ENCODE measurements at regions of chr12 and their contacts with region 1.

Region 1: DNA sequence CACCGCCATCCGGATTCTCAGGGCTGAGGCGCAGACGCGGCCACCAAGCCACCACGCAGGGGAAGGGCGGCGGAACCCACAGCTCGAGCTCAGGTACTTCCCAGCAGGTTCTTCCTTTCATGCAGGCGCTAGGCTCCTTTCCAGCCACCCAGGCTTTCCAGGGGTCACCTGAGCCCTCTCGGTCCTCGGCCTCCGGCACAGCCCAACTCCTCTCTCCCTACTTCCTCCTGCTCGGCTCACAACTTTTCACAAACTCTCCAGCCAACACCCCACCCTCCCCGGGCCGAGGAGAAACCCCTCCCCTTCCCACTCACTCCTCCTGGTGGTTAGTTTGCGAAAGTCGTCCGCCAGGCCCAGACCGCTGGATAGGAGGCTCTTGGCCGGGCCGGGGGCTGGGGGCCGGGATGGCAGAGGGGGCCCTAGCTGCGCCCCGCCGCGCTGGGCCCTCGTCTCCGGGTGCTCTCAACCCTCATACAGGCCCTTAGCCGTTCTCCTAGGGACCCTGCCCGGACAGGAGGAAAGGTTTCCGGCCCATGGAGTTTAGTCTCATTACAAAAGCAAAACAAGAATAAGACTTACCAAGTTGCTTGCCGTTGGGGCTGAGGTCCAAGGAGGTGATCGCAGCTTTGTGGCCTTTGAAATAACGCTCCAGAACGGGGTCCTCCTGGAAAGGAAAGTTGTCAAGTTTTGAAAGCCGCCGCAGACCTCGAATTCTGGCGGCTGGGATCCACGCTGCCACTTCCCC is at the start of gene GALNT4:
- DNase-seq: peak; percentile 88
- CTCF ChIP-seq: peak; percentile 66

Region 2: DNA sequence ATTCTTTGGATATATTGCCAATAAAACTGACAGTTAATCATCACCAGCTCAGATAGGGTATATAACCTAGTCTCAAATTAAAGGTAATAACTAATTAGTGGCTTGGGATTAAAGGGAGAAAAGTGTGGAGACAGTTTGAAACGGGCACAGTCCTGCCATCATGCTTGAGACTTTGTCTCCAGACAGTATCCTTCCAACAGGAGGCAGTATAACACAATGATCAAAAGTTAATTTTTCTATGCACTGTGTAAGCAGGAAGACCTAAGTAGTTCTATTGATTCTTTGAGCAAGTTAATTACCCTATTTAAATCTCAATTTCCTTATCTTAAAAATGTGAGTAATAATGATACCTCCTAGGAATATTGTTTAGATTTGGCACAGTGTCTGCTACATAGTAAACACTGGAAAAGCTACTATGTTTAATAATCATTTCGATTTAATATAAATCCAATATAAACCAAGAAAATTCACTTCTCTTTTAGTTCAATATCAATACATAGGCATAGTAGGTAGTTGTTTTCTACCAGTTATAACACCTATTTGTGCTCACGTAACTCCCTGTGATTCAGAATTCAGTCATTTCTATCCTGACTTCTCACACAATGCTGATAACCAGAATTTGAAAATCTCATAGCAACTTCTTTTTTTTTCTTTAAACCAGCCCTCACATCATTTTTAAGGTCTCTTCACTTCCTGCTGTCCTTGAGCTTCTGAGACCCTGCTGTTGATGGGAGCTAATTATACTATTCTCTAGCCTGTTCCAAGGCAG is 53.8 kb before region 1 on chr12:
- CTCF ChIA-PET with region 1: interaction called, 132 read pairs
- POLR2A ChIA-PET with region 1: no interaction called
- DNase-seq: peak; percentile 39
- CTCF ChIP-seq: peak; percentile 53

Region 3: DNA sequence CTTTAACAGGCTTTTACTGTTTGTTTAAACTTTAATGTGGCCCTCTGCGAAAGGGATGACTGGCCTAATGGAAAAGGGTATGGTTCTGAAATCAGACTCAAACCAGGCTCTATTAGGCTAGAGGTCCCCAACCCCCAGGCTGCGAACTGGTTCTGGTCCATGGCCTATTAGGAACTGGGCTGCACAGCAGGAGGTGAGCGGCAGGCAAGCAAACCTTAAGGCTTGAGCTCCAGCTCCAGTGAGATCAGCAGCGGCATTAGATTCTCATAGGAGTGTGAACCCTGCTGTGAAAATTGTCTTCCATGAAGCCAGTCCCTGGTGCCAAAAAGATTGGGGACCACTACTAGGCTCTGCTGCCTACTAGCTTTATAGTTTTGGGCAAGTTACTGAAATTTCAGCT is 11.2 kb before region 1 on chr12:
- CTCF ChIA-PET with region 1: interaction called, 37 read pairs
- POLR2A ChIA-PET with region 1: no interaction called
- DNase-seq: no peak
- CTCF ChIP-seq: no peak

Region 4: GRCh38 chr12:89618107-89618862 is 93.6 kb after region 1 on chr12:
- CTCF ChIA-PET with region 1: no interaction called
- POLR2A ChIA-PET with region 1: no interaction called
- DNase-seq: no peak
- CTCF ChIP-seq: no peak

Region 5: DNA sequence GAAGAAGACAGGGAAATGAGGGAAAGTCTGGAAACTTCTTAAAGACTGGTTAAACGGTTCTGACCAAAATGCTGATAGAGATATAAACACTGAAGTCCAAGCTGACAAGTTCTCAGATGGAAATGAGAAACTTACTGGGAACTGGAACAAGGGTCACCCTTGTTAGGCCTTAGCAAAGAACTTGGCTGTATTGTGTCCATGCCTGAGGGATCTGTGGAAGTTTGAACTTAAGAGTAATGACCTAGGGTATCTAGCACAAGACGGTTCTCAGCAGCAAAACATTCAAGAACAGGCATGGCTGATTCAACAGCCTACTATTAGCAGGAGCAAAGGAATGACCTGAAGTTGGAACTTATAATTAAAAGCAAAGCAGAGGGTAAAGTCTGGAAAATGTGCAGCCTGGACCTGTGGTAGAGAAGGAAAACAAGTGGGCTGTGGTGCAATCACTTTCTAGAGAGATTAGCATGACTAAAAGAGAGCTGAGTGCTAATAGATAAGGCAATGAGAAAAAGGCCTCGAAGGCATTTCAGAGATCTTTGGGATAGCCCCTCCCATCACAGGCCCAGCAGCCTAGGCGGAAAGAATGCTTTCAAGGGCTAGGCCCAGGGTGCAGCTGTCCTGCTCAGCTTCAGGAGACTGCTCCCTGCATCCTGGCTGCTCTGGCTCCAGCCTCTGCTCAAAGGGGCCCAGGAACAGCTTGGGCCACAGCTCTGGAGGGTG is 123.7 kb after region 1 on chr12:
- CTCF ChIA-PET with region 1: no interaction called
- POLR2A ChIA-PET with region 1: no interaction called
- DNase-seq: no peak
- CTCF ChIP-seq: no peak

Region 6: DNA sequence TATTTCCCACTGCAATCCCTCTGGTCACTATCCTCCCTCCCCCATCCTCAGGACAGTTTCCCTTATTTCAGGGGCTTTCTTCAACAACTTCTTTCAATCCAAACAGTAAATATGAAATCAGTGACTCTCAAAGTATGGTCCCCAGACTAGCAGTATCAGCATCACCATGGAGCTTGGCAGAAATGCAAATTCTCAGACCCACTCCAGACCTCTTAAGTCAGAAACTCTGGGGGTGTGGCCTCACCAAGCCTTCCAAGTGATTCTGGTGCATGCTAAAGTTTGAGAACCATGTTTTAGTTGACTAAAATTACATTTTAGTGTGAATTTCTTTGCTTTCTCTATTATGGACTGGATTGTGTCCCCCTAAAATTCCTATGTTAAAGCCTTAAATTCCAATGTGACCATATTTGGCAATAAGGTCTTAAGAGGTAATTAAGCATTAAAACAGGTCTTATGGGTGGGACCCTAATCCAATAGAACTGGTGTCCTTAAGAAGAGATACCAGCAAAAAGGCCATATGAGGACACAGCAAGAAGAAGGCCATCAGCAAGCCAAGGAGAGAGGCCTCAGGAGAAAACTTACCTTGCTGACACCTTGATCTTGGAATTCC is 160.8 kb after region 1 on chr12:
- CTCF ChIA-PET with region 1: no interaction called
- POLR2A ChIA-PET with region 1: no interaction called
- DNase-seq: no peak
- CTCF ChIP-seq: no peak

Region 7: DNA sequence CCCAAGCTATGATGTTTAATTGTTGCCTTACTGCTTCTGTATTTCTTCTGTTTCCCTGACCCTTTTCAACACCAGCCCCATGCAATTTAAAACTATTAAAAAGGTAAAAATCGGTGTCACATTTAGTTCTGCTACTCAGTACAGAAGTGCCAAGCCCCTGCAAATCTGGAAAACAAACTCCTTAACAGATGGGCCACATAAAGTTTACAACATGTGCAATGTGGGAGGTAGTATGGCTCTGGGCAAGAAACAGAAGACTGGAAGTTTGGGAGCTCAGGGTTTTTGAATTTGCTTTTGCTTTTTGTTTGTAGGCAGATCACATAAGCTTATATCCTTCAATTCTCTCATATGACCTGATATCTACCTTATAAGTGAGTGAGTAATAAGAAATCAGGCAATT is 588.0 kb after region 1 on chr12:
- CTCF ChIA-PET with region 1: no interaction called
- POLR2A ChIA-PET with region 1: no interaction called
- DNase-seq: no peak
- CTCF ChIP-seq: no peak